ENCODE measurements at regions of chr18 and their contacts with region 1.

Region 1: DNA sequence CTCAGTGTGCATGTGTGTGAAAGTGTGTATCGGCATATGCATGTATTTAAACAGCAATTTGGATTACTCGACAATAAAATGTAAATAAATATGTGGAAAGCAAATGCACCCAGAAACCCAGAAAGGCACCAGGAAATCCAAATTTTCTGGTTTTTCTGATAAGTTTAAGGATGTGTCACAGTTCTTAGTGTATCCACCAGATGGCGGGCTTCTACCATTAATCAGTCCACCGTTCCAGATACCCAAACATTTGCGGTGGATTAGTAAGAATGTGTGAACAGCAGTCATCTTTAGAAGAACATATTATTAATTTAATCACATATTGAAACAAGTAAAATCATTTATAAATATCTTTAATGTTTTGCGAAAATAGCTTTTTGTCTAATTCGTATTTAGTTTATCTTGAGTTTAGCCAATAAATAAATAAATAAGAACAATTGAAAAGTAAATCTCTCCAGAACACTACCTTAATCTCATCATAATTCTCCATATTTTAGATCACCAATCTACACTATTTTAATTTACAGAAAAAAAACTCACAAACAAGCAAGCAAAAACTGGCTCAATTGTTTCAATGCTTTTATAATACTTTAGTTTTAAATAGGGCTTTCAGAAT is 298.9 kb downstream of the DSEL start:
- DNase-seq: peak; percentile 15
- ATAC-seq: peak; percentile 57; the same call in 1 of the 2 replicates
- H3K4me3 ChIP-seq: no peak overlapping the region
- H3K27ac ChIP-seq: no peak overlapping the region
- H3K4me1 ChIP-seq: no peaks in the 10 kb centered on the region
- H3K27me3 ChIP-seq: no peaks in the 10 kb centered on the region
- CTCF ChIP-seq: peak; percentile 25 to 61 (median 46); a peak in 4 of 6 replicates
- POLR2A ChIP-seq: no peak
- RAD21 ChIP-seq: peak; percentile 66

Region 2: DNA sequence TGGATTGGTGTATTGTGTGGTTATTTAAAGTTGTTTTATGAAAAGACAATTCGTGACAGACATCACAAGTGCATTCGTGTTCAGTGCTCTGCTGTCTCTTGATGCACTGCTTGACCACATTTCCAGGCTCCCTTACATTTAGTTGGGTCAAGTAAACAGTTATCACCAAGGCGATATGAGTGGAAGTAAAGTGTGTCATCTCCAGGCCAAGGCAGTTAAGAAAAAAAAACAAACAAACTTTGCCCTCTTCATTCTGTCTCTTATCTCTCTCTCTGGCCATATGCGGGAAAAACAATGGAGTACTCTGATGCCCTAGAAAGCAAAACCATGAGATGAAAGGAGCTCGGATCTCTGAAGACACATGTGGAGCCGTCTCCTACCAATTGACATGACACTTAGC is 167.8 kb after region 1 on chr18:
- CTCF ChIA-PET with region 1: no interaction called
- POLR2A ChIA-PET with region 1: no interaction called
- RAD21 ChIA-PET with region 1: no interaction called
- intact Hi-C with region 1: no loop called
- DNase-seq: no peak
- ATAC-seq: no peak
- H3K4me3 ChIP-seq: no peak overlapping the region
- H3K27ac ChIP-seq: no peak overlapping the region
- H3K4me1 ChIP-seq: no peaks in the 10 kb centered on the region
- H3K27me3 ChIP-seq: no peaks in the 10 kb centered on the region
- CTCF ChIP-seq: no peak
- POLR2A ChIP-seq: no peak
- RAD21 ChIP-seq: no peak

Region 3: GRCh38 chr18:67600181-67601172 is 382.8 kb after region 1 on chr18:
- CTCF ChIA-PET with region 1: no interaction called
- POLR2A ChIA-PET with region 1: no interaction called
- RAD21 ChIA-PET with region 1: no interaction called
- intact Hi-C with region 1: no loop called
- DNase-seq: no peak
- ATAC-seq: no peak
- H3K4me3 ChIP-seq: no peak overlapping the region
- H3K27ac ChIP-seq: no peak overlapping the region
- H3K4me1 ChIP-seq: no peaks in the 10 kb centered on the region
- H3K27me3 ChIP-seq: no peaks in the 10 kb centered on the region
- CTCF ChIP-seq: no peak
- POLR2A ChIP-seq: no peak
- RAD21 ChIP-seq: no peak

Region 4: DNA sequence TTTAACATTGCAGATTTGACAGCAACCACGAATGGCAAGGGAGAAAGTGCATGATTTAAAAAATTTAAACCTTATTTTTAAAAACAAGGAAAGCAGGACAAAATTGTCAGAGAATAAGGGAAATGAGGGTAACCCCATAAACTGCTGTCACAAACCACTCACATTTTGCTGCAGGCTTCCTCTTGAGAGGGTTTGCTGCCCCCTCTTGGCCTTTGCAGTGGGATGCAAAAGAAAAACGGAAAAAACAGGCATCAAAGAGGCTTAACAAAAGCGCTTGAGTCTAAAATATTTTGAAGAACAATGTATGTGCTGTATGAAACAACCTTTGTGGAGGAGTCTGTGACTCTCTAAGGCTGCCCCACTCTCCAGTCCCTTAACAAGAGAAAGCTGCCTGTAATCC is 1405.7 kb after region 1 on chr18:
- CTCF ChIA-PET with region 1: no interaction called
- POLR2A ChIA-PET with region 1: no interaction called
- RAD21 ChIA-PET with region 1: no interaction called
- intact Hi-C with region 1: loop called (anchors 5 kb)
- DNase-seq: peak; percentile 16
- ATAC-seq: peak; percentile 62; the same call in 1 of the 2 replicates
- H3K4me3 ChIP-seq: no peak overlapping the region
- H3K27ac ChIP-seq: no peak overlapping the region
- H3K4me1 ChIP-seq: no peaks in the 10 kb centered on the region
- H3K27me3 ChIP-seq: no peaks in the 10 kb centered on the region
- CTCF ChIP-seq: peak; percentile 4 to 68 (median 65); a peak in 4 of 6 replicates
- POLR2A ChIP-seq: no peak
- RAD21 ChIP-seq: peak; percentile 55

Region 5: GRCh38 chr18:68660354-68661183 is 1442.9 kb after region 1 on chr18:
- CTCF ChIA-PET with region 1: no interaction called
- POLR2A ChIA-PET with region 1: no interaction called
- RAD21 ChIA-PET with region 1: no interaction called
- intact Hi-C with region 1: loop called (anchors 1 kb)
- DNase-seq: peak; percentile 29
- ATAC-seq: peak; percentile 52
- H3K4me3 ChIP-seq: no peak overlapping the region
- H3K27ac ChIP-seq: no peak overlapping the region
- H3K4me1 ChIP-seq: no peaks in the 10 kb centered on the region
- H3K27me3 ChIP-seq: no peaks in the 10 kb centered on the region
- CTCF ChIP-seq: peak; percentile 20 to 60 (median 46); a peak in 5 of 6 replicates
- POLR2A ChIP-seq: no peak
- RAD21 ChIP-seq: peak; percentile 50

Region 6: GRCh38 chr18:68735483-68736343 is 1518.1 kb after region 1 on chr18:
- CTCF ChIA-PET with region 1: no interaction called
- POLR2A ChIA-PET with region 1: no interaction called
- RAD21 ChIA-PET with region 1: no interaction called
- intact Hi-C with region 1: loop called (anchors 1 kb)
- DNase-seq: peak; percentile 23
- ATAC-seq: peak; percentile 69; the same call in 1 of the 2 replicates
- H3K4me3 ChIP-seq: no peak overlapping the region
- H3K27ac ChIP-seq: no peak overlapping the region
- H3K4me1 ChIP-seq: no peaks in the 10 kb centered on the region
- H3K27me3 ChIP-seq: no peaks in the 10 kb centered on the region
- CTCF ChIP-seq: peak; percentile 21 to 80 (median 74); a peak in 5 of 6 replicates
- POLR2A ChIP-seq: no peak
- RAD21 ChIP-seq: peak; percentile 60

Region 7: GRCh38 chr18:68840554-68841263 is 1623.0 kb after region 1 on chr18:
- CTCF ChIA-PET with region 1: no interaction called
- POLR2A ChIA-PET with region 1: no interaction called
- RAD21 ChIA-PET with region 1: no interaction called
- intact Hi-C with region 1: loop called (anchors 5 kb)
- DNase-seq: peak; percentile 23
- ATAC-seq: no peak
- H3K4me3 ChIP-seq: no peak overlapping the region
- H3K27ac ChIP-seq: no peak overlapping the region
- H3K4me1 ChIP-seq: peaks cover 0 to 11% of the 10 kb centered on the region in 2 experiments; a peak in 2 of 4 replicates
- H3K27me3 ChIP-seq: no peaks in the 10 kb centered on the region
- CTCF ChIP-seq: no peak
- POLR2A ChIP-seq: no peak
- RAD21 ChIP-seq: no peak

Measured in HCT116 (cell line).